MCF 10A (cell line): ENCODE measurements at regions of chr2 and their contacts with region 1.

Region 1: GRCh38 chr2:69717861-69718273 is 24.1 kb upstream of the ANXA4 start:
- DNase-seq: no peak
- H3K4me3 Mint-ChIP-seq: no peak overlapping the region
- H3K27ac Mint-ChIP-seq: no peak overlapping the region
- H3K4me1 Mint-ChIP-seq: peaks cover 17% of the 10 kb centered on the region
- H3K27me3 Mint-ChIP-seq: no peaks in the 10 kb centered on the region
- CTCF ChIP-seq: no peak

Region 2: GRCh38 chr2:69026026-69026425 is 691.8 kb before region 1 on chr2:
- CTCF ChIA-PET with region 1: interaction called, 3 read pairs
- POLR2A ChIA-PET with region 1: no interaction called
- intact Hi-C with region 1: loop called (anchors 10 kb)
- DNase-seq: peak; percentile 75
- H3K4me3 Mint-ChIP-seq: no peak overlapping the region
- H3K27ac Mint-ChIP-seq: no peak overlapping the region
- H3K4me1 Mint-ChIP-seq: peaks cover 5% of the 10 kb centered on the region
- H3K27me3 Mint-ChIP-seq: no peaks in the 10 kb centered on the region
- CTCF ChIP-seq: peak; percentile 59

Region 3: GRCh38 chr2:69386789-69387734 is 330.8 kb before region 1 on chr2 and contains the start of gene GFPT1:
- CTCF ChIA-PET with region 1: no interaction called
- POLR2A ChIA-PET with region 1: interaction called, 3 read pairs
- intact Hi-C with region 1: loop called (anchors 2 kb)
- DNase-seq: peak; percentile 90
- H3K4me3 Mint-ChIP-seq: peak within 1 kb of the TSS; percentile 90
- H3K27ac Mint-ChIP-seq: peak within 1 kb of the TSS; percentile 96
- H3K4me1 Mint-ChIP-seq: peaks cover 35% of the 10 kb centered on the region
- H3K27me3 Mint-ChIP-seq: no peaks in the 10 kb centered on the region
- CTCF ChIP-seq: no peak
- total RNA-seq, gene GFPT1: 176 and 230 TPM in 2 replicates

Region 4: DNA sequence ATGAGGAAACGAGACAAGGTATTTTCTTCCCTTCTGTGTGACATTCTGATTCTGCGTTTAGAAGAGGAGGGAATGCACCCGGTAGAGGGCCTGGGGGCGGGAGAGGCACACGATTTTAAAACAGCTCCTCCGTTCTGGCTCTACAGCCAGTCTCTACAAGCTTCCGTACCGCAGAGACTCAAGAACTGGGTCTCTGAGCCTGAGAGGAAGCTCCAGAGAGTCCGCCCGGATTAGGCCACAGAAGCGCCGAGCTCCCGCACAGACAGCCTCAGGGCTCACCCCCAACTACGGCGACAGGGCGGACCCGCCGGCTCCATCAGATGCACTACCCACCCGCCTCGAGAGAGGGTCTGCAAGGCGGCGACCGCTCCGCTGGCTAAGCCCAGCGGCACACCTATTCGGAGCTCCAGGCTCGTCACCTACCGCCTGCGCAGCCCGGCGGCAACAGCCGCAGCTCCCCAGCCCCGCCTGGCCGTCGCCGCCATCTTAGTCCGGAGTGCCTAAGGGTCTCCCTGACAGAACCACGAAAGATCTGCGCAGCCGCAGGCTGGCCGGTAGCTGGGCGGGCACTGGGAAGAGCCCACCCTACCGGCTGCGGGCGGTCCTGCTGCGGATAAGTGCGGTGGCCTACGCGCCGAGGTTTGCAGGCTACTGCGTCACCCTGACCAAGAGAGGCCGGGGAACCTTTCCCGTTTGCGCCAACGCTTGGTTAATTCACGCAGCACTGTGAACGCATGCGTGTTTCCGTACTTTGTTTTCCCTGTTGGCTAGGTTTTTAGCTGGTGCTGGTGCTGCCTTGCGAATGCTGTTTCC is 280.7 kb before region 1 on chr2 and contains the start of gene NFU1:
- CTCF ChIA-PET with region 1: no interaction called
- POLR2A ChIA-PET with region 1: no interaction called
- intact Hi-C with region 1: loop called (anchors 2 kb)
- DNase-seq: peak; percentile 86
- H3K4me3 Mint-ChIP-seq: peak within 1 kb of the TSS; percentile 81
- H3K27ac Mint-ChIP-seq: peak within 1 kb of the TSS; percentile 99
- H3K4me1 Mint-ChIP-seq: peaks cover 13% of the 10 kb centered on the region
- H3K27me3 Mint-ChIP-seq: no peaks in the 10 kb centered on the region
- CTCF ChIP-seq: peak; percentile 19
- total RNA-seq, gene NFU1: 29.5 and 32.3 TPM in 2 replicates

Region 5: DNA sequence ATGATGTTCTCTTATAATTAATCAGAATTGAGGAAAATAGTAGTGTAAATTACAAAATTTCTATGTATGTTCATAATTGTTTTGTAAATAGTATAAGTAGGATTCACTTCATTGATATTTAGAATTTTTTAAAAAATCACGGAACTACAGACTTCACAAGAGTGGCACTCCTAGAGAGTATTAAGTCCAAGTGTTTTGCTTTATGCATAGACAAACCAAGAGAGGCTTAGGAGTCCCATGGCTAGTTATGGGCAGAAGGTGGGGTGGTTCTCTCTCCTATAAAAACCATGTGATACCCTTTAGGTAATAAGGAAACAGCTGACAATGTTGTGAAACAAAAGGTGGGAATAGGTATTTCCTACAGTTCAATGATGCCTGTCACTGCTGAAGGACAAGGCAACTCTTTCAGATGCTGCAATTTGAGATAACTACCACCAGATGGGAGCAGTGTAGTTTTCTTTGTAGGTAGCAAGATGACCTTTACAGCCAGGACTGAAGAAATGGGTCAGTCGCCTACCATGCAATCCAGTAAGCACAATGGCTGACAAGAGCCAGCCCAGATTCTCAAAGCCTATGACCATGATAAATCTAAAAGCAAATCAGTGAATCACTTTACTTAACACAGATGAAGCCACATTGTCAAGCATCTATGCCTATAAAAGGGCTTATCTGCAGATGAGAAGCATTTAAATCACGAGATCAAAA is 158.3 kb before region 1 on chr2:
- CTCF ChIA-PET with region 1: interaction called, 83 read pairs
- POLR2A ChIA-PET with region 1: no interaction called
- intact Hi-C with region 1: loop called (anchors 1 kb)
- DNase-seq: peak; percentile 71
- H3K4me3 Mint-ChIP-seq: no peak overlapping the region
- H3K27ac Mint-ChIP-seq: no peak overlapping the region
- H3K4me1 Mint-ChIP-seq: peaks cover 6% of the 10 kb centered on the region
- H3K27me3 Mint-ChIP-seq: no peaks in the 10 kb centered on the region
- CTCF ChIP-seq: peak; percentile 64

Region 6: DNA sequence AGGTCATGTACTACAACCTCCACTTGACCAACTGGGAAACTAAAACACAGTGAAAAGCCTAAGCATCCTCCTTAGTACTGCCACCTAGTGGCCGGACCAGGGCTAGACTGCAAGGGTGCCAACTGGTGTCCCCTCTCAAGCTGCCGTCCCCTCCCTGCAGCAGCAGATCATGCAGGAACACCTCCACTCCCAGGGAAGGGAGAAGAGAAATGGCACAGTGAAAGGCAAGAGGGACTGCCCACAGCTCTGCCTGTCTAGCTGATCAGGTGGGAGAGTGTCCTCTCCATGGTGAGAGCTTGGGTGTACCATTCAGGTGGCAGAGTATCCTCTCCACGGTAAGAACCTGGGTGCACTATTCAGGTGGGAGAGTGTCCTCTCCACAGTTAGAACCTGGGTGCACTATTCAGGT is 152.4 kb before region 1 on chr2:
- CTCF ChIA-PET with region 1: interaction called, 83 read pairs
- POLR2A ChIA-PET with region 1: interaction called, 3 read pairs
- intact Hi-C with region 1: no loop called
- DNase-seq: peak; percentile 53
- H3K4me3 Mint-ChIP-seq: no peak overlapping the region
- H3K27ac Mint-ChIP-seq: no peak overlapping the region
- H3K4me1 Mint-ChIP-seq: peaks cover 31% of the 10 kb centered on the region
- H3K27me3 Mint-ChIP-seq: no peaks in the 10 kb centered on the region
- CTCF ChIP-seq: peak; percentile 47

Region 7: DNA sequence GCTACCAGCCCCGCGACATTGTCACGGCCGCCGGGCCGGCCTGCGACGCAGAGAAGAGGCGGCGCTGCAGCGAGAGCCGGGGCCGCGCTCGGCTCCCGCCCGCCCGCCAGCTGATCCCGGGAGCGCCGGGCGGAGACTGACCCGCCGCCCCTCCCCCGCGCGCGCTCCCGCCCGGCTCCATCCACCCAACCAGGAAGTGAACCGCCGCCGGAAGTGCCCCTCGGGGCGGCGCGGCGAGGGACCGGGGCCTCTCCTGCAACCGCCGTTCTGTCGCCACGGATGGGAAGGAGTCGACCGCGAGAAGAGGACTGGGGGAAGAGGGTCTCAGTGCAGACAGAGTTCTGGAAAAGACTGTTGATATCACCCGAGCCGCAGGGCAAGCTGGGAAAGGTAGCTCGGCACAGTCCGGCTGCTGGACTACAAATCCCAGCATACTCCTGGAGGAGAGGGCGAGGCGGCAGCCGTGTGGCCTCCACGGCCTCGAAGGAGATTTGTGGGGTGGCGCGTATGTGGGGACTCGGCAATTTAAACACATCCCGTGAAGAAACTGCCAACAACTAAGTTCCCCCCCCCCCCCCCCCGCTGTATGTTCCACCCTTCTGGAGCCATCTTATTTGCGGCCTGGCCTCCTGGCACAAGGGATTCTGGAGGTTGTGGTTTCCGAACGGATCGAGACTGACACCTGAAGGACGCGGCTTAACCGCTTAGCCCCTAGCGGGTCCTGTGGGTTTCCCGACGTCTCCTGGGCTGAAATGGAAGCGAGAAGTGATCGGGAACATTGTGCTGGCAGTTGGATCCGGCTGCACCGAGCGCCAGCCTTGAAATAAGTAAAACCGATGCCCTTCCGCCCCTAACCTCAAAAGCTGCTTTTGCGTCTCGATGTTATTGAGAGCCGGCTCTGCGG is 74.0 kb before region 1 on chr2 and contains the start of gene AAK1:
- CTCF ChIA-PET with region 1: interaction called, 6 read pairs
- POLR2A ChIA-PET with region 1: interaction called, 4 read pairs
- intact Hi-C with region 1: loop called (anchors 1 kb)
- DNase-seq: peak; percentile 86
- H3K4me3 Mint-ChIP-seq: peak within 1 kb of the TSS; percentile 73
- H3K27ac Mint-ChIP-seq: peak within 1 kb of the TSS; percentile 74
- H3K4me1 Mint-ChIP-seq: peaks cover 48% of the 10 kb centered on the region
- H3K27me3 Mint-ChIP-seq: no peaks in the 10 kb centered on the region
- CTCF ChIP-seq: no peak
- total RNA-seq, gene AAK1: 75.8 and 108 TPM in 2 replicates